K562 (cell line): ENCODE measurements at regions of chr14 and their contacts with region 1.

Region 1: DNA sequence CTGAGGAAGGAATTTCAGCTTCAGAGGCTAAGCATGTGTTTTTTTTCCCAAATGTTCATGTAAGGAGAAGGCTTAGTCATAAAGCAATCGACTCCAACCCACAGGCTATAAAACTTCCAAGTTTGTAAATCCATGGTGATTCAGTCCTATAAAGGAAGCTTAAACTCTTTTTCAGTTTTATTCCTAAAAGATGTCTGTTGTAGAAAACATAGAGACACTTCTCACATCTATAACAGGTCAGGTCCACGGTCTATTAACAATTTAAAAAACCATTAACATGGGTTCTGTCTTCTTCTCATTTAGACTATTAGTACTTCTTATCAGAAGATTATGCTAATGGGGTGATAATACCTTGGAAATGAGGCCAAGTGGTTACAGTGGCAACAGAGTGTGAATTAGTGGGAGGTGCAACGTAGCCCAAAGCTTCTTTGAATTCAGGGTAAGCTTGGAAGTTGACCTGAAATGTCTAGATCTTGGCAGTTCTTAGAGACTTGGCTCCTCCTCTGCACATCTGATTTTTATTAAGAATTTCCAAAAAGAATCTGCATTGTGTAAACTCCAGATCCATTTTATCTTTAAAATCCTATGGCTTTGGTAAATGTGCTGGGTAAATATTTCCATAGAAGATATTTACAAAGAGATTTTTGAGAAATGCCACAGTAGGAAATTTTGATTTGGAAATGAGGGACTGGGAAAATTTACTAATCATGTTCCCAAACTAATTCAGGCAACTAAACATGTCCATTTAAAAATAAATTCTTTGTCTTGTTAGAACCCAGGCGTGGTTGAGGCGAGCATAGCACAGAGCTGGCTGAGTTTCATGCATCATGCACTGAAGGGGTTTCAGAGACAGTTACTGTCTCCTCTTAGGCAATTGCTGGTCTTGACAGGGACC is 86.4 kb downstream of the EML1 start:
- DNase-seq: no peak
- ATAC-seq: no peak
- H3K4me3 ChIP-seq: no peak overlapping the region
- H3K27ac ChIP-seq: no peak overlapping the region
- H3K4me1 ChIP-seq: no peaks in the 10 kb centered on the region
- H3K27me3 ChIP-seq: peaks cover 7 to 47% of the 10 kb centered on the region in 2 experiments; a peak in 3 of 5 replicates
- CTCF ChIP-seq: no peak
- EP300 ChIP-seq: no peak
- POLR2A ChIP-seq: no peak
- RAD21 ChIP-seq: no peak

Region 2: DNA sequence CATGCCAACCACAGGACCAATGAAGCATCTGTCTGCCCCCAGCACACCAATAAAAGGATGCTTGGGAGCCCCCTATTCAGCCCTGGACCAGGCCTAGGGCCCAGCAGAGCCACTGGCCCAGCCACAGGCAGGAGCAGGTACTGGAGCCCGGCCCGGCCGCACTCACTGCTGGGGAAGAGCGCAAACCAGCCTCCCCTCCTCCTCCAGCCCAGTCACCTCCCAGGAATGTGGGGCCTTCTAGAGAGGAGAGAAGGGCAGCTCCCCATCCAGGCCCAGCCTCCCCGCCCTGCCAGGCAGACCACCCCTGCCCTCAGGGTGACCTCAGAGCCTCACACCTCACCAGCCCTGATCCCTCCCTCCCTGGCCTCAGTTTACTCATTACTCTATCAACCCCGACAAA is 342.2 kb before region 1 on chr14:
- CTCF ChIA-PET with region 1: no interaction called
- POLR2A ChIA-PET with region 1: no interaction called
- in situ Hi-C with region 1: no loop called
- intact Hi-C with region 1: no loop called
- DNase-seq: no peak
- ATAC-seq: no peak
- H3K4me3 ChIP-seq: no peak overlapping the region
- H3K27ac ChIP-seq: no peak overlapping the region
- H3K4me1 ChIP-seq: peaks cover 0 to 31% of the 10 kb centered on the region in 2 experiments; a peak in 2 of 5 replicates
- H3K27me3 ChIP-seq: no peaks in the 10 kb centered on the region
- CTCF ChIP-seq: no peak
- EP300 ChIP-seq: no peak
- POLR2A ChIP-seq: no peak
- RAD21 ChIP-seq: no peak

Region 3: DNA sequence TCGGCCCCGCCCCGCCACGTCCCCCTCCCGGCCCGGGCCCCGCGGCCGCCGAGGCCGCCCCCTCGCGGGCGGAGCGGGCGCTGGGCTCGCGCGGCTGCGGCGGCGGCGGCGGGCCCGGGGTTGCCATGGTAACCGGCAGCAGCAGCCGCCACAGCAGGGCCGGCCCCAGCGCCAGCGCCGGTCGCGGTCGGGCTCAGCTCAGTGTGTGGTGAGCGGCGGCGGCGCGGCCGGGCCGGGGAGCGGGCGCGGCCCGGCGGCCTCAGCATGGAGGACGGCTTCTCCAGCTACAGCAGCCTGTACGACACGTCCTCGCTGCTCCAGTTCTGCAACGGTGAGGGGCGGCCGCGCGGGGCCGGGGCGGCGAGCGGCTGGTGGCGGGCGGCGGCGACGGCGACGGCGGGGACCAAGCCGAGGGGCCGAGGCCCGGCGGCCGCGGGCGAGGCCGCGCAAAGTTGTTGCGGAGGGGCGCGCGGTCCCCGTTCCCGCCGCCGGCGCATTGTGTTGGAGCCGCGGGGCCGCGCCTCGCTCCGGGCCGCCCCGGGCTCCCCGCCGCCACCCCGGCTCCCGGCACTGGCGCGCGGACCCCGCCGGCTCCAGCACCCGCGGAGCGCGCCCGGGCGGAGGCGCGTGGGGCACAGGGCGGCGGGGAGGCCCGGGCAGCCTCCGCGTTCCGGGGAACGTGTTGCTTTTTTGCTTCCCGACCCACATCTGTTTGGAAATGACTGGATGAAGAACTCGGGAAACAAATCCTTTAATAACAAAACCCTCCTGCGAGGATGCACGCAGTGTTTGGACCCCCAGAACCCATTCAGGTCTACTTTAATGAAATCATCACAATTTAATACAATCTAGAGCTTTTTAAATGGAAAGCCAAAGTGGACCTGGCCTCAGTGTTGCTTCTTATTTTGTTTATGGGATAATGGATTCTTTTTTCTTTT is 86.2 kb before region 1 on chr14 and contains the start of gene EML1:
- CTCF ChIA-PET with region 1: no interaction called
- POLR2A ChIA-PET with region 1: no interaction called
- in situ Hi-C with region 1: no loop called
- intact Hi-C with region 1: loop called (anchors 10 kb)
- DNase-seq: peak; percentile 73 to 95 (median 93)
- ATAC-seq: peak; percentile 97
- H3K4me3 ChIP-seq: peak within 1 kb of the TSS; percentile 28; the same call in 1 of the 2 replicates
- H3K27ac ChIP-seq: no peak within 1 kb of the TSS
- H3K4me1 ChIP-seq: peaks cover 0 to 14% of the 10 kb centered on the region in 2 experiments; a peak in 3 of 5 replicates
- H3K27me3 ChIP-seq: peaks cover 3 to 4% of the 10 kb centered on the region in 2 experiments; a peak in 2 of 5 replicates
- CTCF ChIP-seq: peak in 2 of 3 experiments; percentile 5 to 8; a peak in 1 of 6 replicates
- EP300 ChIP-seq: no peak
- POLR2A ChIP-seq: no peak
- RAD21 ChIP-seq: no peak; a peak in 1 of 4 replicates
- polyA plus RNA-seq, gene EML1: 0.01 TPM in 1 of 2 experiments, not detected in the other

Region 4: DNA sequence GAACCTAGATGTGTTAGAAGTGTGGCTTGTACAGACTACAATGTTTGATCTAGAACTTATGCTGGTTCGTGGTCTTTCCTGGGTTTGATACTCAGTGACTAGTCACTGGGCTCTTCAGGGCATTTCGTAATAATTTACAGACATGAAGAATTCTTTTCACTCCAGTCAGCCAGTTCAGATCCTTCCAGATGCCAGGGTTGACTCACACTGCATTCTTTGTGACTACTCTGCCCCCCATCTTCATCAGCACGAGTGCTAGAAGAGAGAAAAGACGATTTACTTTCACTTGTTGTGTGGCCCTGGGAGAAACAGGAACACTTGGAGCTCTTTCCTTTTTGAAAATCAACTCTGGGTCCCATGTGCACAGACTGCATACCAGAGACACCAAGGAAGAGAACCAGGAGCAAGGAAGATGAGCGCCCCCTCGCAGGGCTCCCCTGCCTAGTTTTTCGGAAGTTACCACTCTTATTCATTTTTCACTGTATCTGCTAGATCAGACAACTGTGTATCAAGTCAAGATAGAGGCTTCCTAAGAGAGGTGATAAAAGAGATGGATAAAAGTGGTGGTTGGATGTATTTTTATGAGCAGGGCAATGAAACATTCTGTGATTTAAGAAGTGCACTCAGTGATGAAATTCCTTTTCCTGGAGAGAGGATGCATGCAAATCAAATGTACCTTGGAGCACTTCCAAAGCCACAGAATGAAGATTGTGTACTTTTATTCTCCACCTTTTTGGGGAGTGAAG is 152.1 kb after region 1 on chr14:
- CTCF ChIA-PET with region 1: no interaction called
- POLR2A ChIA-PET with region 1: no interaction called
- in situ Hi-C with region 1: no loop called
- intact Hi-C with region 1: no loop called
- DNase-seq: no peak
- ATAC-seq: no peak
- H3K4me3 ChIP-seq: no peak overlapping the region
- H3K27ac ChIP-seq: no peak overlapping the region
- H3K4me1 ChIP-seq: peaks cover 0 to 5% of the 10 kb centered on the region in 2 experiments; a peak in 3 of 5 replicates
- H3K27me3 ChIP-seq: no peaks in the 10 kb centered on the region
- CTCF ChIP-seq: 0 out of 6 replicates have a peak, but pooled peaks of 1 of the 3 experiments have one; percentile 2
- EP300 ChIP-seq: no peak
- POLR2A ChIP-seq: no peak
- RAD21 ChIP-seq: no peak